ENCODE measurements at regions of chr4 and their contacts with region 1.

Region 1: GRCh38 chr4:112532267-112532666 is 16.3 kb upstream of the NEUROG2 start:
- DNase-seq: no peak
- H3K4me3 ChIP-seq: no peak overlapping the region
- H3K27ac ChIP-seq: no peak overlapping the region
- H3K4me1 ChIP-seq: no peaks in the 10 kb centered on the region
- H3K27me3 ChIP-seq: peaks cover 0 to 8% (median 0%) of the 10 kb centered on the region in 7 donors
- CTCF ChIP-seq: no peak
- POLR2A ChIP-seq: no peak

Region 2: DNA sequence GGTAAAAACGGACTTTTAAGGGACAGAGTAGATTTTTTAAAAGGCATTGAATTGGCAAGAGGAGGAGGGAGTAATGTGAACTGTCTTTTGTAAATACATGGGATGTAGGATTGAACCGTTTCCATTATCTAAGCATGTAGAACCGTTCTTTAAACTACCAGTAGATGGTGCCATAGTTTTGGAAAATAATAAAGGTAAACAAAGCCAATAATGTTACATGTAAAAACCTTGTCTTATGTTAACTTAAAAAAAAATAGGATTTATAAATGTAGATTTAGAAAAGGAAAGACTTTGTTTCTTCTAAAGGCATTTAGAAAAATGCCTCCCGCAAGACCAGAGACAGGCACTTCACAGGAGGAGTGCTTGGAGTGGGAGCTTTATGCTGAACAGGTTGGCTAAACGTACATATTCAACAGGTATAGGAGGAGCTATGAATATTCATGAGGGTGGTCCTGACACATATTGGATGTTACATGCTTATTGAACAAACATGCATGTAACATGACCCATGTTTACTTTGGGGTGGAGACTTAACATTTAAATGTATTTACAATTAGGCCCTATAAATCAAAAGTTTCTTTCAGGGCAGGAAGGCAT is 432.5 kb before region 1 on chr4:
- intact Hi-C with region 1: loop called (anchors 10 kb)
- DNase-seq: no peak
- H3K4me3 ChIP-seq: no peak overlapping the region
- H3K27ac ChIP-seq: no peak overlapping the region
- H3K4me1 ChIP-seq: peaks cover 0 to 33% (median 5%) of the 10 kb centered on the region in 6 donors
- H3K27me3 ChIP-seq: no peaks in the 10 kb centered on the region
- CTCF ChIP-seq: peak; percentile 33 to 80 (median 71)
- POLR2A ChIP-seq: no peak

Region 3: GRCh38 chr4:112245383-112245782 is 286.9 kb before region 1 on chr4:
- intact Hi-C with region 1: no loop called
- DNase-seq: no peak
- H3K4me3 ChIP-seq: no peak overlapping the region
- H3K27ac ChIP-seq: no peak overlapping the region
- H3K4me1 ChIP-seq: peaks cover 0 to 15% (median 0%) of the 10 kb centered on the region in 6 donors
- H3K27me3 ChIP-seq: no peaks in the 10 kb centered on the region
- CTCF ChIP-seq: no peak
- POLR2A ChIP-seq: no peak

Region 4: DNA sequence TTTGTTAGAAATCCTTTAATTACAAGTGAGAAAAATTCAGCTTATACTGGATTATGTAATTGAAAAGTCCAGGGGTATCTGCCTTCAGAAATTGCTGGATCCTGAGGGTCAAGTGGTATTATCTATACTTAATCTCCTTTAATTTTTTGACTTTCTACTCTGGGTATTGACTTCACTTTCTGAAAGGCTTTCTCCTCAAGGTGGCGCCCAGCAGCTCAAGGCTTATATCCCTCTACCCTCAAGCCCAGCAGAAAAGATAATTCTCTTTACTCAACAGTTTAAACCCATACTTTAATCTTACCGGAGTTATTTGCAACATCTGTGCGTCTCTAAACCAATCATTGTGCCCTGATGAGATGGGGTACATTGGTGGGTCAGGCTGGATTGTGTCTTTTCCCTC is 234.2 kb after region 1 on chr4:
- intact Hi-C with region 1: no loop called
- DNase-seq: no peak
- H3K4me3 ChIP-seq: no peak overlapping the region
- H3K27ac ChIP-seq: no peak overlapping the region
- H3K4me1 ChIP-seq: peaks cover 0 to 8% (median 2%) of the 10 kb centered on the region in 6 donors
- H3K27me3 ChIP-seq: no peaks in the 10 kb centered on the region
- CTCF ChIP-seq: no peak
- POLR2A ChIP-seq: no peak